Panc1 (cell line): ENCODE measurements at regions of chr5 and their contacts with region 1.

Region 1: DNA sequence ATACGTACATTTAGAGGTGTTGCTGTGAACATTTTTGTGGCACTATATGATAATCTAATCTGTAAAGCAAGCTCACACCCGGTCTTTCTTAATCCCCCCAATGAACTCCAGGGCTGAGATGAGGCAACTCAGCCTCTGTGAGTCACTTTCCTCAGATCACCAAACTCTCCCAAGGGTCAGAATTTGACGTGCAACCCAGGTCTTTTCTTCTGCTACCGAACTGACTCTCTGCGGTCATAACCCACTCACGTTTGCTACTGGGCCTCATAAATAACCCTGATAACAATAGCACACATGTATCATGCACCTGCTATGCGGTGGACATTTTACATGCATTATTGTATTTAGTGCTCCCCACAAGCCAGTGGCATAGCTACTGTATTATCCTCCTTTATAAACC is 153.1 kb downstream of the DROSHA start:
- DNase-seq: no peak
- ATAC-seq: no peak
- H3K4me3 ChIP-seq: no peak overlapping the region
- H3K27ac ChIP-seq: no peak overlapping the region
- H3K4me1 ChIP-seq: no peaks in the 10 kb centered on the region
- H3K27me3 ChIP-seq: no peaks in the 10 kb centered on the region
- CTCF ChIP-seq: no peak

Region 2: DNA sequence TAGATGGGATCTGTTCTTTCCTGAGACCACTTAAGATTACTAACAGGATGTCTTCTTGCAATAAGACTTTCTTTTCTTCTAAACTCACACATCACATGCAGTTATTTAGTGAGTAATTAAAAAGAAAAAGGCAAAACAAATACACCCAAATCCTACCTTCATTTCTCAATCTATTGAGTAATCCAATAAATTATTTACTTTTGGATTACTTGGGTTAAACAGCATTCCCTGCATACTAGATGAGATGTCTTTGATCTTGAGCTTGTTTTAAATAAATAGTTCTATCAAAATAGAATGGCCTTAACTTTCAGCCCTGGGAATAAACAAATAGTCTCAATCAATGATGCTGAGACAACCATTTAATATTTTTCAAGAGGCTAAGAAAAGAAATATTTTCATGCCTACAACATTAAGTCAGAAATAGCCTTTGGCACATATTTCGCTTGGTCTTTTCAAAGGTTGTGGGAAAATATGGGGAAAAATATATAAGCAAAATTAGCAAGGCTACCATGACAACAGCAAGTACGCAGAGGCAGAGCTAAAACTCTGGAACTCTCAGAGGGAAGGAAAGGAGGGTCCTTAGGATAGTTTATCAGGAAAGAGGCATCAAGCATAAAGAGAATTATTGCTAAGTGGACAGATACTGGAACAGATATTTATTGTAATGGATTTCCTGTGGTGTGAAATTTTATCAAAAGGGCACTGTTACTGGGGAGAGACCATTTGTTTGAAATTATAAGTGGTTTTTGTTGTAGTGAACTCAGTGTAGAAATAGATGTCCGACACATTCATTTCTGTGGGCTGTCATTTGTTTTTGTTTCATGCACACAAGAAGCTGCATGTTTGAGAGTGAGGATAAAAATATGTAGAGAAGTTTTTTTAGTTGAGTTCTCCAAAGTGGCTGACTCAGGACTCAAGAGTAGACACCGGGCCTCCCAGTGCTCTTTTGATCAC is 255.6 kb before region 1 on chr5:
- CTCF ChIA-PET with region 1: interaction called, 14 read pairs
- POLR2A ChIA-PET with region 1: no interaction called
- in situ Hi-C with region 1: no loop called
- intact Hi-C with region 1: no loop called
- DNase-seq: no peak
- ATAC-seq: no peak
- H3K4me3 ChIP-seq: no peak overlapping the region
- H3K27ac ChIP-seq: no peak overlapping the region
- H3K4me1 ChIP-seq: no peaks in the 10 kb centered on the region
- H3K27me3 ChIP-seq: no peaks in the 10 kb centered on the region
- CTCF ChIP-seq: no peak

Region 3: GRCh38 chr5:31303688-31304087 is 75.2 kb before region 1 on chr5:
- CTCF ChIA-PET with region 1: no interaction called
- POLR2A ChIA-PET with region 1: no interaction called
- in situ Hi-C with region 1: no loop called
- intact Hi-C with region 1: no loop called
- DNase-seq: no peak
- ATAC-seq: no peak
- H3K4me3 ChIP-seq: no peak overlapping the region
- H3K27ac ChIP-seq: no peak overlapping the region
- H3K4me1 ChIP-seq: no peaks in the 10 kb centered on the region
- H3K27me3 ChIP-seq: no peaks in the 10 kb centered on the region; the same call in 1 of the 2 replicates
- CTCF ChIP-seq: no peak

Region 4: GRCh38 chr5:31355337-31355736 is 23.5 kb before region 1 on chr5:
- CTCF ChIA-PET with region 1: no interaction called
- POLR2A ChIA-PET with region 1: no interaction called
- in situ Hi-C with region 1: no loop called
- intact Hi-C with region 1: no loop called
- DNase-seq: no peak
- ATAC-seq: no peak
- H3K4me3 ChIP-seq: no peak overlapping the region
- H3K27ac ChIP-seq: no peak overlapping the region
- H3K4me1 ChIP-seq: no peaks in the 10 kb centered on the region
- H3K27me3 ChIP-seq: peaks cover 4% of the 10 kb centered on the region; the same call in 1 of the 2 replicates
- CTCF ChIP-seq: no peak